ENCODE measurements at regions of chr10 and their contacts with region 1.

Region 1: GRCh38 chr10:77846718-77847630 is 79.6 kb downstream of the DLG5 start:
- DNase-seq: peak; percentile 85
- H3K4me3 ChIP-seq: no peak overlapping the region
- H3K27ac ChIP-seq: peak overlapping the region; percentile 88 to 92 (median 90)
- H3K4me1 ChIP-seq: peaks cover 37 to 55% (median 43%) of the 10 kb centered on the region in 4 donors
- H3K27me3 ChIP-seq: no peaks in the 10 kb centered on the region
- CTCF ChIP-seq: peak; percentile 94 to 98 (median 97)
- EP300 ChIP-seq: no peak
- POLR2A ChIP-seq: no peak

Region 2: GRCh38 chr10:77710759-77711682 is 136.0 kb before region 1 on chr10:
- in situ Hi-C with region 1: no loop called
- intact Hi-C with region 1: no loop called
- DNase-seq: peak; percentile 77
- H3K4me3 ChIP-seq: peak overlapping the region; percentile 9 to 50 (median 22)
- H3K27ac ChIP-seq: no peak overlapping the region
- H3K4me1 ChIP-seq: peaks cover 0 to 7% (median 3%) of the 10 kb centered on the region in 4 donors
- H3K27me3 ChIP-seq: peaks cover 37% of the 10 kb centered on the region
- CTCF ChIP-seq: peak; percentile 84 to 98 (median 97)
- EP300 ChIP-seq: no peak
- POLR2A ChIP-seq: no peak

Region 3: GRCh38 chr10:77898647-77899477 is 51.9 kb after region 1 on chr10:
- in situ Hi-C with region 1: no loop called
- intact Hi-C with region 1: no loop called
- DNase-seq: peak; percentile 77
- H3K4me3 ChIP-seq: no peak overlapping the region
- H3K27ac ChIP-seq: peak overlapping the region; percentile 55 to 78 (median 59)
- H3K4me1 ChIP-seq: peaks cover 18 to 41% (median 38%) of the 10 kb centered on the region in 4 donors
- H3K27me3 ChIP-seq: no peaks in the 10 kb centered on the region
- CTCF ChIP-seq: no peak
- EP300 ChIP-seq: no peak
- POLR2A ChIP-seq: no peak

Region 4: GRCh38 chr10:77926566-77927401 is 79.8 kb after region 1 on chr10 and contains the start of gene DLG5:
- in situ Hi-C with region 1: no loop called
- intact Hi-C with region 1: loop called (anchors 5 kb)
- DNase-seq: peak; percentile 75
- H3K4me3 ChIP-seq: peak within 1 kb of the TSS; percentile 60 to 85 (median 80)
- H3K27ac ChIP-seq: peak within 1 kb of the TSS; percentile 81 to 90 (median 84)
- H3K4me1 ChIP-seq: peaks cover 10 to 33% (median 22%) of the 10 kb centered on the region in 4 donors
- H3K27me3 ChIP-seq: peaks cover 8% of the 10 kb centered on the region
- CTCF ChIP-seq: peak in 1 of 5 experiments; percentile 3
- EP300 ChIP-seq: no peak
- POLR2A ChIP-seq: no peak
- total RNA-seq, gene DLG5: 31.4 to 90.1 (median 44.6) TPM

Region 5: GRCh38 chr10:78004215-78005026 is 157.4 kb after region 1 on chr10:
- in situ Hi-C with region 1: loop called in 2 of 4 experiments (anchors 25 kb)
- intact Hi-C with region 1: no loop called
- DNase-seq: no peak
- H3K4me3 ChIP-seq: no peak overlapping the region
- H3K27ac ChIP-seq: no peak overlapping the region
- H3K4me1 ChIP-seq: no peaks in the 10 kb centered on the region
- H3K27me3 ChIP-seq: no peaks in the 10 kb centered on the region
- CTCF ChIP-seq: no peak
- EP300 ChIP-seq: no peak
- POLR2A ChIP-seq: no peak

Measured in transverse colon (tissue), 4 donors.